CD4-positive, alpha-beta T cell (primary cell): ENCODE measurements at regions of chr2 and their contacts with region 1.

Region 1: GRCh38 chr2:241702132-241703031 is 543 bp downstream of the ING5 start:
- DNase-seq: peak; percentile 81 to 94 (median 84)
- ATAC-seq: peak; percentile 73
- H3K4me3 ChIP-seq: peak overlapping the region; percentile 73
- H3K4me3 Mint-ChIP-seq: peak overlapping the region; percentile 93
- H3K27ac ChIP-seq: peak overlapping the region; percentile 34 to 67
- H3K27ac Mint-ChIP-seq: peak overlapping the region; percentile 87
- H3K4me1 ChIP-seq: peaks cover 28% of the 10 kb centered on the region
- H3K4me1 Mint-ChIP-seq: peaks cover 28% of the 10 kb centered on the region
- H3K27me3 ChIP-seq: no peaks in the 10 kb centered on the region
- H3K27me3 Mint-ChIP-seq: no peaks in the 10 kb centered on the region
- CTCF ChIP-seq: peak; percentile 60

Region 2: GRCh38 chr2:240491483-240491882 is 1210.9 kb before region 1 on chr2:
- CTCF ChIA-PET with region 1: no interaction called
- POLR2A ChIA-PET with region 1: no interaction called
- intact Hi-C with region 1: no loop called
- DNase-seq: no peak
- ATAC-seq: no peak
- H3K4me3 ChIP-seq: no peak overlapping the region
- H3K4me3 Mint-ChIP-seq: no peak overlapping the region
- H3K27ac ChIP-seq: no peak overlapping the region
- H3K27ac Mint-ChIP-seq: no peak overlapping the region
- H3K4me1 ChIP-seq: no peaks in the 10 kb centered on the region
- H3K4me1 Mint-ChIP-seq: no peaks in the 10 kb centered on the region
- H3K27me3 ChIP-seq: no peaks in the 10 kb centered on the region
- H3K27me3 Mint-ChIP-seq: no peaks in the 10 kb centered on the region
- CTCF ChIP-seq: no peak

Region 3: GRCh38 chr2:240566203-240567136 is 1135.9 kb before region 1 on chr2:
- CTCF ChIA-PET with region 1: no interaction called
- POLR2A ChIA-PET with region 1: no interaction called
- intact Hi-C with region 1: loop called in 1 of 2 experiments (anchors 5 kb)
- DNase-seq: peak; percentile 89 to 98 (median 95)
- ATAC-seq: peak; percentile 60
- H3K4me3 ChIP-seq: peak overlapping the region; percentile 87
- H3K4me3 Mint-ChIP-seq: peak overlapping the region; percentile 96
- H3K27ac ChIP-seq: peak overlapping the region; percentile 91 to 97
- H3K27ac Mint-ChIP-seq: peak overlapping the region; percentile 98
- H3K4me1 ChIP-seq: peaks cover 88% of the 10 kb centered on the region
- H3K4me1 Mint-ChIP-seq: peaks cover 84% of the 10 kb centered on the region
- H3K27me3 ChIP-seq: no peaks in the 10 kb centered on the region
- H3K27me3 Mint-ChIP-seq: no peaks in the 10 kb centered on the region
- CTCF ChIP-seq: peak; percentile 86

Region 4: GRCh38 chr2:240832205-240832727 is 870.1 kb before region 1 on chr2:
- CTCF ChIA-PET with region 1: no interaction called
- POLR2A ChIA-PET with region 1: no interaction called
- intact Hi-C with region 1: loop called in 1 of 2 experiments (anchors 10 kb)
- DNase-seq: peak; percentile 98 to 100 (median 99)
- ATAC-seq: peak; percentile 91
- H3K4me3 ChIP-seq: peak overlapping the region; percentile 43
- H3K4me3 Mint-ChIP-seq: peak overlapping the region; percentile 38
- H3K27ac ChIP-seq: no peak overlapping the region
- H3K27ac Mint-ChIP-seq: no peak overlapping the region
- H3K4me1 ChIP-seq: peaks cover 14% of the 10 kb centered on the region
- H3K4me1 Mint-ChIP-seq: no peaks in the 10 kb centered on the region
- H3K27me3 ChIP-seq: peaks cover 17 to 26% of the 10 kb centered on the region in 2 experiments
- H3K27me3 Mint-ChIP-seq: peaks cover 36% of the 10 kb centered on the region
- CTCF ChIP-seq: no peak

Region 5: DNA sequence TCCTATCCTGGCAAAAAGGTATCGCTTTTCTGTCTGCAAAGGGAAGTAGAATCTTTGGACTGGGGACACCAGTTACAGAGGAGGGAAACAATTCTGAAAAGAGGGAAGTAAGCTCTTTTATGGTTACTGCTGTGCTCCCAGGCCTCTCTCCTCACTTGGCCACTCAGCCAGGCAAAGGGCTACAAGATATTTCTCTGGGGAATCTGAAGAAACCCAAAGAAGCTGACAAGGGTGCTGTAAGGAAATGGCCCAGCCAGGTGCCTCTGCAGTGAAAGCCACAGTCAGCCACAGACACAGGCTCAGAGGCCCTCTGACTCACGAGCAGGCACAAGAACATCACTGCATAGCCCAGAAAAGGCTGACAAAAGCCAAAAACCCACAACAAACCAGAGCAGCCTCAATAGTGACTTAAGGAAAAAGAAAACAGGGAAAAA is 392.7 kb before region 1 on chr2:
- CTCF ChIA-PET with region 1: no interaction called
- POLR2A ChIA-PET with region 1: interaction called, 14 read pairs
- intact Hi-C with region 1: loop called in 1 of 2 experiments (anchors 5 kb)
- DNase-seq: peak; percentile 49 to 86 (median 68)
- ATAC-seq: peak; percentile 96
- H3K4me3 ChIP-seq: no peak overlapping the region
- H3K4me3 Mint-ChIP-seq: peak overlapping the region; percentile 68
- H3K27ac ChIP-seq: peak overlapping the region; percentile 31 to 42
- H3K27ac Mint-ChIP-seq: peak overlapping the region; percentile 87
- H3K4me1 ChIP-seq: peaks cover 69% of the 10 kb centered on the region
- H3K4me1 Mint-ChIP-seq: peaks cover 89% of the 10 kb centered on the region
- H3K27me3 ChIP-seq: no peaks in the 10 kb centered on the region
- H3K27me3 Mint-ChIP-seq: no peaks in the 10 kb centered on the region
- CTCF ChIP-seq: no peak

Region 6: GRCh38 chr2:241637000-241637791 is 65.2 kb before region 1 on chr2 and contains the starts of genes ATG4B and THAP4:
- CTCF ChIA-PET with region 1: interaction called, 10 read pairs
- POLR2A ChIA-PET with region 1: interaction called, 18 read pairs
- intact Hi-C with region 1: loop called in 1 of 2 experiments (anchors 5 kb)
- DNase-seq: peak; percentile 52 to 89 (median 68)
- ATAC-seq: peak; percentile 66
- H3K4me3 ChIP-seq: peak within 1 kb of the TSS; percentile 76
- H3K4me3 Mint-ChIP-seq: peak within 1 kb of the TSS; percentile 95
- H3K27ac ChIP-seq: peak within 1 kb of the TSS; percentile 82 to 93
- H3K27ac Mint-ChIP-seq: peak within 1 kb of the TSS; percentile 84
- H3K4me1 ChIP-seq: peaks cover 45% of the 10 kb centered on the region
- H3K4me1 Mint-ChIP-seq: peaks cover 56% of the 10 kb centered on the region
- H3K27me3 ChIP-seq: no peaks in the 10 kb centered on the region
- H3K27me3 Mint-ChIP-seq: no peaks in the 10 kb centered on the region
- CTCF ChIP-seq: no peak
- total RNA-seq, gene ATG4B: 86.5 to 89.4 TPM
- total RNA-seq, gene THAP4: 27.5 to 31.4 TPM

Region 7: GRCh38 chr2:241686649-241687425 is 15.5 kb before region 1 on chr2 and contains the start of gene DTYMK:
- CTCF ChIA-PET with region 1: interaction called, 17 read pairs
- POLR2A ChIA-PET with region 1: interaction called, 179 read pairs
- intact Hi-C with region 1: loop called (anchors 1 to 2 kb)
- DNase-seq: peak; percentile 89 to 98 (median 95)
- ATAC-seq: peak; percentile 90
- H3K4me3 ChIP-seq: peak within 1 kb of the TSS; percentile 84
- H3K4me3 Mint-ChIP-seq: peak within 1 kb of the TSS; percentile 95
- H3K27ac ChIP-seq: peak within 1 kb of the TSS; percentile 60 to 85
- H3K27ac Mint-ChIP-seq: peak within 1 kb of the TSS; percentile 84
- H3K4me1 ChIP-seq: peaks cover 37% of the 10 kb centered on the region
- H3K4me1 Mint-ChIP-seq: peaks cover 38% of the 10 kb centered on the region
- H3K27me3 ChIP-seq: no peaks in the 10 kb centered on the region
- H3K27me3 Mint-ChIP-seq: no peaks in the 10 kb centered on the region
- CTCF ChIP-seq: no peak
- total RNA-seq, gene DTYMK: 4.8 to 6.0 TPM

Region 8: DNA sequence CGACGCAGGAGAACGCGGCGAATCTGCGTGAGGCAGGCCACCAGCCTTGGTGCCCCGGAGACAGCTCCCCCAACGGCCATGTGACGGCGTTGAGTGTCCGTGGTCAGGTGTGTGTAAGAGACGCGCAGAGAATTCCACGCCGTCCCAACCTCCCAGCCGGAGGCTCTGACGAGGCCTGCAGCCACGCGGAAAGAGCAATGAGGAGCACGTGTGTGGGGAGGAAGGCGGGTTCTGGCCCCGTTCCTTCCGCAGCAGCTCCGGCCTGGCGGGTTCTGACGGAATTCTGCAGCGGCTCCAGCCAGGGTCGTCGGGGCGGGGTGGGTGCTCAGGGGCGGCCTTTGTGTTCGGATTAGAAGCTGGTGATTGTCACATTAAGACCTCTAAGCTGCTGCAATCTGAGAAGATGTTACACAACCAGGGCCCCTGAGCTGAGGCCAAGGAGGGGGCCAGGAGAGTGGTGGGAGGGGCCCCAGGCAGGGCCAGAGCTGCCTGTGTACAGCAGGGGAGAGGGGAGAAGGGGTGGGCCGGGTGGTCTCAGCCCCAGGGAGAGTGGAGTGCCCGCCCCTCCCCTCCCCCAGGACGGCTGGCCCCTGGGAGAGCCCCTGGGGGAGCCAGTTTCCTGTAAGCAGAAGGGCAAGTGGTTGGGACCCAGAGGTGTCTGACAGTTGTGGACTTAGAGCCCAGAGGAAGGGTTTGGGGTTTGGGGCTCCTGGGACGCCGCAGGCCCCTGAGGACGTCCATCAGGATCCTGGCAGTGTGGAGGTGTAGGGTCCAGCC is 69.1 kb after region 1 on chr2:
- CTCF ChIA-PET with region 1: no interaction called
- POLR2A ChIA-PET with region 1: no interaction called
- intact Hi-C with region 1: no loop called
- DNase-seq: no peak
- ATAC-seq: no peak
- H3K4me3 ChIP-seq: no peak overlapping the region
- H3K4me3 Mint-ChIP-seq: no peak overlapping the region
- H3K27ac ChIP-seq: no peak overlapping the region
- H3K27ac Mint-ChIP-seq: peak overlapping the region; percentile 16
- H3K4me1 ChIP-seq: peaks cover 17% of the 10 kb centered on the region
- H3K4me1 Mint-ChIP-seq: peaks cover 15% of the 10 kb centered on the region
- H3K27me3 ChIP-seq: peaks cover 0 to 4% of the 10 kb centered on the region in 2 experiments
- H3K27me3 Mint-ChIP-seq: no peaks in the 10 kb centered on the region
- CTCF ChIP-seq: no peak